Kidney (tissue), 22 donors: ENCODE measurements at regions of chr2 and their contacts with region 1.

Region 1: DNA sequence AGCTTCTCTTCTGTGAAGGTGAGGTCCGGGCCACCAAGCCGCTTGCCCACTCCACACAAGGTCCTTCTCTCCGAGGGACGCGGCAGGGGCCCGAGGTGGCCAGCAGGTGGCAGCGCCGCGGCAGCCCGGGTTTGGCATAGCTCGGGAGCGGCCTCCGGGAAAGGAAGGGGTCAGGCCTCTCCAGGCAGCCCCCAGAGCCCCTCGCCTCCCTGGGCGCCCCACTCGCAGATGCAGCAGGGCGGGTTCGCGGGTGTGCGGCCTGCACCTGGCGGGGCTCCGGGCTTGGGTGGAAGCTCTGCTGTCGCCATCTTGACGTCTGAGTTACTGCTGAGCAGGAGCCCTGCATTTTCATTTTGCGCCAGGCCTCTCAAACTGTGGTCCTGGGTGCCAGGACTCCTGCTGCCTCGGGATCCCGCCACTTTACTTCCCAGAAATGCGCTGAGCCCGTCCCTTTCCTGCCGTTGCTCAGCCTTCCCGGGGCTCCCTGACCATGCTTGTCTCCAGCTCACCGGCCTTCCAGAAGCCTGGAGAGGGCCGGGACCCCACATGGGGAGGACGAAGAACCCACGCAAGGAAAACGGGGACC is 18.6 kb upstream of the NCL start:
- DNase-seq: peak; percentile 80 to 92 (median 86)
- H3K4me3 ChIP-seq: peak overlapping the region in 2 of 3 donors; percentile 44 to 61
- H3K27ac ChIP-seq: peak overlapping the region; percentile 51 to 69
- H3K4me1 ChIP-seq: no peaks in the 10 kb centered on the region
- H3K27me3 ChIP-seq: no peaks in the 10 kb centered on the region
- CTCF ChIP-seq: peak; percentile 74

Region 2: GRCh38 chr2:231557571-231558237 is 74.8 kb after region 1 on chr2:
- intact Hi-C with region 1: loop called (anchors 10 kb)
- DNase-seq: peak; percentile 74 to 94 (median 89)
- H3K4me3 ChIP-seq: no peak overlapping the region
- H3K27ac ChIP-seq: no peak overlapping the region
- H3K4me1 ChIP-seq: peaks cover 0 to 15% (median 4%) of the 10 kb centered on the region in 3 donors
- H3K27me3 ChIP-seq: no peaks in the 10 kb centered on the region
- CTCF ChIP-seq: peak; percentile 79

Region 3: GRCh38 chr2:232511336-232511888 is 1028.5 kb after region 1 on chr2:
- intact Hi-C with region 1: no loop called
- DNase-seq: peak in 1 of 5 donors; percentile 63
- H3K4me3 ChIP-seq: no peak overlapping the region
- H3K27ac ChIP-seq: no peak overlapping the region
- H3K4me1 ChIP-seq: no peaks in the 10 kb centered on the region
- H3K27me3 ChIP-seq: no peaks in the 10 kb centered on the region
- CTCF ChIP-seq: no peak